PC-9 (cell line): ENCODE measurements at regions of chr4 and their contacts with region 1.

Region 1: GRCh38 chr4:93263166-93263565 is 565.4 kb upstream of the ATOH1 start:
- DNase-seq: no peak
- H3K4me3 ChIP-seq: no peak overlapping the region
- H3K27ac ChIP-seq: no peak overlapping the region
- H3K4me1 ChIP-seq: no peaks in the 10 kb centered on the region
- H3K27me3 ChIP-seq: no peaks in the 10 kb centered on the region
- CTCF ChIP-seq: no peak

Region 2: GRCh38 chr4:93320356-93320755 is 57.2 kb after region 1 on chr4:
- CTCF ChIA-PET with region 1: no interaction called
- POLR2A ChIA-PET with region 1: no interaction called
- intact Hi-C with region 1: no loop called
- DNase-seq: no peak
- H3K4me3 ChIP-seq: no peak overlapping the region
- H3K27ac ChIP-seq: no peak overlapping the region
- H3K4me1 ChIP-seq: no peaks in the 10 kb centered on the region
- H3K27me3 ChIP-seq: no peaks in the 10 kb centered on the region
- CTCF ChIP-seq: no peak

Region 3: DNA sequence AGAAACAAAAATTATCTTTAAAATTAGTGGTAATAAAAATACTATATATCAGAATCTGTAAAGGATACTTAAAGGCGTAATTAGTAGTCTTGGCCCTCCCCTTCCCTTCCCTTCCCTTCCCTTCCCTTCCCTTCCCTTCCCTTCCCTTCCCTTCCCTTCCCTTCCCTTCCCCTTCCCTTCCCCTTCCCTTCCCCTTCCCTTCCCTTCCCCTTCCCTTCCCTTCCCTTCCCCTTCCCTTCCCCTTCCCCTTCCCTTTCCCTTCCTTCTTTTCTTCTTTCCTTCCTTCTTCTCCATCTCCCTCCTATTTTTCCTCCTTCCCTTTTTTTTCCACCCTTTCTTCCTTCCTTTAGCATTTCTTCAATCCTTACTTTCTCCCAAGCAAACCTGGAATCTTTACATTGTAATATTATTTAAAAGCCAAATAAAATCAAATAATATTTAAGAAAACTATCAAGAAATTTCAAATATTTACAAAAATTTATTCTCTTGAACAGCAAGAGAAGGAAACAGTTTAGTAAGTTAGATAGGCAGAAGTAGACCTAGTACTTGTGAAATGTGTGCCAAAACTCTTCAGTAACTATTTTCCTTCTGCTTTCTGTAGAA is 185.6 kb after region 1 on chr4:
- CTCF ChIA-PET with region 1: interaction called, 15 read pairs
- POLR2A ChIA-PET with region 1: no interaction called
- intact Hi-C with region 1: no loop called
- DNase-seq: no peak
- H3K4me3 ChIP-seq: no peak overlapping the region
- H3K27ac ChIP-seq: no peak overlapping the region
- H3K4me1 ChIP-seq: no peaks in the 10 kb centered on the region
- H3K27me3 ChIP-seq: no peaks in the 10 kb centered on the region
- CTCF ChIP-seq: no peak